HCT116 (cell line): ENCODE measurements at regions of chr6 and their contacts with region 1.

Region 1: GRCh38 chr6:33299237-33299944 is 649 bp upstream of the RGL2 start:
- DNase-seq: peak; percentile 80
- ATAC-seq: peak; percentile 65
- H3K4me3 ChIP-seq: peak overlapping the region; percentile 76 to 85
- H3K27ac ChIP-seq: peak overlapping the region; percentile 96
- H3K4me1 ChIP-seq: peaks cover 6 to 26% of the 10 kb centered on the region in 2 experiments; a peak in 3 of 4 replicates
- H3K27me3 ChIP-seq: no peaks in the 10 kb centered on the region
- CTCF ChIP-seq: peak in 2 of 3 experiments; percentile 80 to 86; a peak in 4 of 6 replicates
- POLR2A ChIP-seq: peak; percentile 80
- RAD21 ChIP-seq: no peak

Region 2: GRCh38 chr6:33200219-33201146 is 98.9 kb before region 1 on chr6 and contains the starts of genes RXRB and SLC39A7:
- CTCF ChIA-PET with region 1: interaction called, 3 read pairs
- POLR2A ChIA-PET with region 1: no interaction called
- RAD21 ChIA-PET with region 1: no interaction called
- intact Hi-C with region 1: loop called (anchors 1 kb)
- DNase-seq: peak; percentile 98
- ATAC-seq: peak; percentile 61
- H3K4me3 ChIP-seq: peak within 1 kb of the TSS; percentile 63 to 69
- H3K27ac ChIP-seq: peak within 1 kb of the TSS; percentile 94
- H3K4me1 ChIP-seq: peaks cover 35 to 60% of the 10 kb centered on the region in 2 experiments
- H3K27me3 ChIP-seq: no peaks in the 10 kb centered on the region
- CTCF ChIP-seq: no peak
- POLR2A ChIP-seq: no peak
- RAD21 ChIP-seq: no peak
- total RNA-seq, gene RXRB: 49.9 TPM
- total RNA-seq, gene SLC39A7: 130 TPM

Region 3: DNA sequence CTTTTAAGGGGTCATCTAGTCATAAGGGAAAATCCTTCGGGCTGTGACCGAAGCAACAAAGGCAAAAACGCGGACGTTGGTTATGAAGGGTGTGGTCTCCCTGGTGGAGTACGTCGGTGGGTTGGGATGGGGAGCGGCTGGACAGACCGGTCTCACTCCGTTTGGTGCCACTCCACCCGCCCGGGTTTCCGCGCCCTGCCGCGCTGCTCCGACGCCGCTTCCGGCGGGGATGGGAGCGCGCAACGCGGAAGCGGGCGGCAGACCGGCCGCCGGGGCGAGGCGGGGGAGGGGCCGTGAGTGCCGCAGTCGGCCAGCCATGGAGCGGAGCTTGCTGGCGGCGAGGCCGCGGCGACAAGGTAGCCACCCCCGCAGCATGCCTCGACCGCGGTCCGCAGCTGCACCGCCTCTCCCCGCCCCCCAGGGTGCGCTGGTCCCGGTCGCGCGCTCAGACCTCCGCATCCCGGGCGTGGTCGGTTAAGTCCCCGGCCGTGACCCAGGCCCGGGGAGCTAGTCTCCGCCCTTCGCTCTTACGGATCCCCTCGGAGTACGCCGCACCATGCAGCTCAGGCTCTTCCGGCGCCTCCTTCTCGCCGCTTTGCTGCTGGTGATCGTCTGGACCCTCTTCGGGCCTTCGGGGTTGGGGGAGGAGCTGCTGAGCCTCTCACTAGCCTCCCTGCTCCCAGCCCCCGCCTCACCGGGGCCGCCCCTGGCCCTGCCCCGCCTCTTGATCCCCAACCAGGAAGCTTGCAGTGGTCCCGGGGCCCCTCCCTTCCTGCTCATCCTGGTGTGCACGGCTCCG is 22.3 kb before region 1 on chr6 and contains the start of gene B3GALT4:
- CTCF ChIA-PET with region 1: interaction called, 9 read pairs
- POLR2A ChIA-PET with region 1: interaction called, 12 read pairs
- RAD21 ChIA-PET with region 1: no interaction called
- intact Hi-C with region 1: no loop called
- DNase-seq: no peak
- ATAC-seq: peak; percentile 65
- H3K4me3 ChIP-seq: peak within 1 kb of the TSS; percentile 34 to 99
- H3K27ac ChIP-seq: peak within 1 kb of the TSS; percentile 82
- H3K4me1 ChIP-seq: peaks cover 43 to 68% of the 10 kb centered on the region in 2 experiments
- H3K27me3 ChIP-seq: no peaks in the 10 kb centered on the region
- CTCF ChIP-seq: peak in 2 of 3 experiments; percentile 46 to 63; a peak in 4 of 6 replicates
- POLR2A ChIP-seq: peak; percentile 81
- RAD21 ChIP-seq: no peak
- total RNA-seq, gene B3GALT4: 1.9 TPM

Region 4: GRCh38 chr6:33288921-33289748 is 10.3 kb before region 1 on chr6 and contains the starts of genes PFDN6 and WDR46:
- CTCF ChIA-PET with region 1: interaction called, 11 read pairs
- POLR2A ChIA-PET with region 1: interaction called, 11 read pairs
- RAD21 ChIA-PET with region 1: no interaction called
- intact Hi-C with region 1: no loop called
- DNase-seq: peak; percentile 83
- ATAC-seq: peak; percentile 94
- H3K4me3 ChIP-seq: peak within 1 kb of the TSS; percentile 97
- H3K27ac ChIP-seq: peak within 1 kb of the TSS; percentile 67
- H3K4me1 ChIP-seq: peaks cover 10 to 15% of the 10 kb centered on the region in 2 experiments
- H3K27me3 ChIP-seq: no peaks in the 10 kb centered on the region
- CTCF ChIP-seq: no peak
- POLR2A ChIP-seq: peak; percentile 59
- RAD21 ChIP-seq: no peak
- total RNA-seq, gene PFDN6: 90.5 TPM
- total RNA-seq, gene WDR46: 90.6 TPM

Region 5: GRCh38 chr6:33317669-33318425 is 18.5 kb after region 1 on chr6 and contains the start of gene ZBTB22:
- CTCF ChIA-PET with region 1: interaction called, 10 read pairs
- POLR2A ChIA-PET with region 1: interaction called, 13 read pairs
- RAD21 ChIA-PET with region 1: interaction called in 1 of 2 experiments, 3 read pairs
- intact Hi-C with region 1: loop called (anchors 2 kb)
- DNase-seq: peak; percentile 98
- ATAC-seq: peak; percentile 82
- H3K4me3 ChIP-seq: peak within 1 kb of the TSS; percentile 55 to 63
- H3K27ac ChIP-seq: peak within 1 kb of the TSS; percentile 68
- H3K4me1 ChIP-seq: peaks cover 36 to 66% of the 10 kb centered on the region in 2 experiments
- H3K27me3 ChIP-seq: no peaks in the 10 kb centered on the region
- CTCF ChIP-seq: no peak
- POLR2A ChIP-seq: no peak
- RAD21 ChIP-seq: no peak
- total RNA-seq, gene ZBTB22: 11.7 TPM

Region 6: GRCh38 chr6:33410050-33410710 is 110.8 kb after region 1 on chr6:
- CTCF ChIA-PET with region 1: no interaction called
- POLR2A ChIA-PET with region 1: no interaction called
- RAD21 ChIA-PET with region 1: no interaction called
- intact Hi-C with region 1: loop called (anchors 5 kb)
- DNase-seq: peak; percentile 95
- ATAC-seq: peak; percentile 91
- H3K4me3 ChIP-seq: peak overlapping the region; percentile 67 to 77
- H3K27ac ChIP-seq: peak overlapping the region; percentile 78
- H3K4me1 ChIP-seq: peaks cover 5 to 18% of the 10 kb centered on the region in 2 experiments; a peak in 3 of 4 replicates
- H3K27me3 ChIP-seq: no peaks in the 10 kb centered on the region
- CTCF ChIP-seq: no peak
- POLR2A ChIP-seq: no peak
- RAD21 ChIP-seq: no peak

Region 7: DNA sequence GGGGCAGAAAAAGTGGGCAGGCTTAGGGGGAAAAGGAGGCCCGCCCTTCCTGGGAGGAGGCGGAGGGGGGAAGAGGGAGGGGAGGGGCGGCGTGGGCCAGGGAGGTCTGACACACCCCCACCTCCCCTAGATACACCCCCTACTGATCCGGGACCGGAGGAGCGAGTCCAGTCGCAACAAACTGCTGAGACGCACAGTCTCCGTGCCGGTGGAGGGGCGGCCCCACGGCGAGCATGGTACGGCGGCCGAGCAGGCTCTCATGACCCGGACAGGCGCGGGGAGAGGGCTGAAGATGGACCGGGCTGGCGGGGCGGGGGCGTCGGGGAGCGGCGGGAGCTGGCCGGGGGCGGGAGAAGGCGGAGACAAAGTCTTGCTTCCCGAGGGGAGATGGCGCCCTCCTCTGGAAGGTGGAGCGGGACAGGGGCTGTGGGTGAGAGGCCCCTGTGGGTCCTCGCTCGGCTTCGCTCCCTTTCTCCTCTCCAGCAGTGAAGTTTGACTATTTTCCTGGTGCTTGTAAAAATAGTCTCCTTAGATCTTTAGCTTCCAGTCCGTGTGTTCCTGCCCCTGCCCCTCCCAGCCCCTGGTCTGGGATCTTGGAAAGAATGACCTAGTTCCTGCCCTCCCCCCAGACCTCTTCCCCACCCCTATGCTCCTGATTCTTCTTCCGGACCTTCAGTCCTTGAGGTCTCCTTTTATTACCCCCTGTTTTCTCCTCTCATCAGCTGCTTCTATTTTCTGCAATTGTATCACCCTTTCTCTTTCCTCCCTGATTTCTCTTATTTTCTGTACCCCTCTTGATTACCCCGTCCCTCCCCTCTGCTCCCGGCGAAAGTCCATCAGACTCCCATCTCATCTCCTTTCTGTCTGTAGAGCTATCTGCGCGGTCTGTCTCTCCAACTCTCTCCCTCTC is 126.5 kb after region 1 on chr6:
- CTCF ChIA-PET with region 1: no interaction called
- POLR2A ChIA-PET with region 1: no interaction called
- RAD21 ChIA-PET with region 1: no interaction called
- intact Hi-C with region 1: loop called (anchors 5 kb)
- DNase-seq: peak; percentile 63
- ATAC-seq: peak; percentile 77
- H3K4me3 ChIP-seq: peak overlapping the region; percentile 65 to 68
- H3K27ac ChIP-seq: peak overlapping the region; percentile 86
- H3K4me1 ChIP-seq: peaks cover 22 to 56% of the 10 kb centered on the region in 2 experiments
- H3K27me3 ChIP-seq: no peaks in the 10 kb centered on the region
- CTCF ChIP-seq: peak in 2 of 3 experiments; percentile 60 to 65; a peak in 4 of 6 replicates
- POLR2A ChIP-seq: peak; percentile 64
- RAD21 ChIP-seq: no peak